H1 (cell line): ENCODE measurements at regions of chr2 and their contacts with region 1.

Region 1: GRCh38 chr2:231687133-231687852 is 21.0 kb upstream of the PTMA start:
- DNase-seq: peak; percentile 75 to 93
- H3K4me3 ChIP-seq: peak overlapping the region; percentile 16 to 54 (median 32); a peak in 7 of 8 replicates
- H3K27ac ChIP-seq: peak overlapping the region; percentile 46
- H3K4me1 ChIP-seq: peaks cover 4 to 42% (median 21%) of the 10 kb centered on the region in 4 experiments
- H3K27me3 ChIP-seq: no peaks in the 10 kb centered on the region
- CTCF ChIP-seq: peak in 2 of 3 experiments; percentile 79 to 92; a peak in 3 of 4 replicates
- EP300 ChIP-seq: no peak
- POLR2A ChIP-seq: peak in 1 of 2 experiments; percentile 79; a peak in 2 of 3 replicates
- RAD21 ChIP-seq: peak; percentile 61 to 67

Region 2: GRCh38 chr2:231522799-231523180 is 164.5 kb before region 1 on chr2:
- CTCF ChIA-PET with region 1: no interaction called
- POLR2A ChIA-PET with region 1: no interaction called
- DNase-seq: no peak
- H3K4me3 ChIP-seq: no peak overlapping the region
- H3K27ac ChIP-seq: no peak overlapping the region
- H3K4me1 ChIP-seq: peaks cover 0 to 4% (median 2%) of the 10 kb centered on the region in 4 experiments; a peak in 1 of 7 replicates
- H3K27me3 ChIP-seq: no peaks in the 10 kb centered on the region
- CTCF ChIP-seq: no peak
- EP300 ChIP-seq: no peak
- POLR2A ChIP-seq: no peak
- RAD21 ChIP-seq: no peak

Region 3: DNA sequence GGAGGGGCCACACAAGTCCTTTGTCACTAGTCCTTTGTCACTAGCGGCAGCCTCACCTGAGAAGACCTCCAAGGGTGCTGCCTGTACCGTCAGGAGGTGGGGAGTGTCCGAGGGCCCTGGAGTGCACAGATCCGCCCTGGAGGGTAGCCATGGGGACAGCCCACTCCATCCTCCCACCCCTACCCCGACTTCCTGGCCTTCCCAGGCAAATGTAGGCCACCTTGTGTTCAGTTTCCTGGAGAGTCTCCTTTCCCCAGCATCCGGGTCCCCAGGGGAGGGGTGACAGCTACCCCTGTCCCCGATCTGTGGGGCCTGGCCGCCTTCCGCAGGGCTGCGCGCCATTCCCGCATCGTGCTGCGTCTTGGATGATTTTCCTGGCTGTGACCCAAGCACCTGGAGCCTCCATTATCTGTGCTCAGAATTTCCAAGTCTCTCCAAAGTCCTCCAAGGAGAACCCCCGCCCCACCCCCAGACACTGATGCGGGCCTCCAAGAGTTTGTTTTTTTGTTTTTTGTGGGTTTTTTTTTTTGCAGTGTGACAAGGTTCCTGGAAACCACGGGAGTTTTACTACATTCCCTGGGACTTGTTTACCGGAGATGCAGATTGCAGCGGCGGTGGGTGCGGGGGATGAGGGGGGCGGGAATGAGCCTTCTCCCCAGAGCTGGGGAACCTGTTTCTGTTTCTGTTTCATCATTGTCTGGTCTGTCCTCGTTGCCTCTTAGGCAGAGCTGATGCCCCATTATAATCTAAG is 66.0 kb before region 1 on chr2:
- CTCF ChIA-PET with region 1: interaction called, 38 read pairs
- POLR2A ChIA-PET with region 1: interaction called, 6 read pairs
- DNase-seq: peak in 1 of 2 experiments; percentile 77
- H3K4me3 ChIP-seq: peak overlapping the region in 1 of 4 experiments; percentile 30; a peak in 1 of 8 replicates
- H3K27ac ChIP-seq: peak overlapping the region; percentile 87
- H3K4me1 ChIP-seq: peaks cover 9 to 14% (median 12%) of the 10 kb centered on the region in 4 experiments
- H3K27me3 ChIP-seq: no peaks in the 10 kb centered on the region
- CTCF ChIP-seq: no peak
- EP300 ChIP-seq: no peak
- POLR2A ChIP-seq: no peak
- RAD21 ChIP-seq: no peak

Region 4: DNA sequence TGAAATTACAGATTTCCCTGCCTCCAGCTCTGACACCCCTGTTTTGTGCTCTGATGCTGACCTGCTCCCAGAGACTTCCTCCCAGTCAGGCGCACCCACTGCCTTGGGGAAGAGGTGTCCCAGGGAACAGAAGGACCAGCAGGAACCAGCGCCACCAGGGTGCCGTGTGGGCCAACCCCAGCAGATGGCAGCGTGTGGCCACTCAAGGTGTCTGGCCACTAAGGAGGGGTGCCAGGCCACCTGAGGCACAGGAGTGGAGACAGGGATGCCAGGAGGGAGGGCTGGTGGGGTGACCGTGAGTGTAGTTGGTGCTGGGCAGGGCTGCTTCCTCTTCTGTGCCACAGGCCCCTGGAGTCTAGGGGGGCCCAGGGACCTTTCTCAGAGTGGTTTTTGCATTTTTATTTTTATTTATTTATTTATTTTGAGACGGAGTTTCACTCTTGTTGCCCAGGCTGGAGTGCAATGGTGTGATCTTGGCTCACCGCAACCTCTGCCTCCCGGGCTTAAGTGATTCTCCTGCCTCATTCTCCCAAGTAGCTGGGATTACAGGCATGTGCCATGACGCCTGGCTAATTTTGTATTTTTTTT is 38.6 kb before region 1 on chr2:
- CTCF ChIA-PET with region 1: interaction called, 13 read pairs
- POLR2A ChIA-PET with region 1: interaction called, 3 read pairs
- DNase-seq: peak in 1 of 2 experiments; percentile 88
- H3K4me3 ChIP-seq: no peak overlapping the region
- H3K27ac ChIP-seq: no peak overlapping the region
- H3K4me1 ChIP-seq: peaks cover 2 to 7% (median 3%) of the 10 kb centered on the region in 4 experiments; a peak in 4 of 7 replicates
- H3K27me3 ChIP-seq: no peaks in the 10 kb centered on the region
- CTCF ChIP-seq: peak; percentile 88 to 95 (median 90)
- EP300 ChIP-seq: no peak
- POLR2A ChIP-seq: no peak
- RAD21 ChIP-seq: peak; percentile 87 to 92

Region 5: GRCh38 chr2:231662028-231662810 is 25.1 kb before region 1 on chr2:
- CTCF ChIA-PET with region 1: interaction called, 6 read pairs
- POLR2A ChIA-PET with region 1: interaction called, 51 read pairs
- DNase-seq: peak; percentile 97 to 98
- H3K4me3 ChIP-seq: peak overlapping the region; percentile 14 to 54 (median 24); a peak in 6 of 8 replicates
- H3K27ac ChIP-seq: peak overlapping the region; percentile 95
- H3K4me1 ChIP-seq: peaks cover 0 to 26% (median 10%) of the 10 kb centered on the region in 4 experiments; a peak in 6 of 7 replicates
- H3K27me3 ChIP-seq: peaks cover 0 to 10% (median 3%) of the 10 kb centered on the region in 4 experiments; a peak in 5 of 7 replicates
- CTCF ChIP-seq: 0 out of 4 replicates have a peak, but pooled peaks of 1 of the 3 experiments have one; percentile 5
- EP300 ChIP-seq: peak; percentile 42 to 63; a peak in 1 of 3 replicates
- POLR2A ChIP-seq: peak in 1 of 2 experiments; percentile 79; a peak in 2 of 3 replicates
- RAD21 ChIP-seq: peak in 1 of 2 experiments; percentile 15; a peak in 1 of 4 replicates

Region 6: GRCh38 chr2:231701456-231702373 is 14.4 kb after region 1 on chr2:
- CTCF ChIA-PET with region 1: interaction called, 135 read pairs
- POLR2A ChIA-PET with region 1: interaction called, 1,080 read pairs
- DNase-seq: no peak
- H3K4me3 ChIP-seq: no peak overlapping the region
- H3K27ac ChIP-seq: no peak overlapping the region; the same call in 1 of the 2 replicates
- H3K4me1 ChIP-seq: peaks cover 0 to 10% (median 3%) of the 10 kb centered on the region in 4 experiments; a peak in 5 of 7 replicates
- H3K27me3 ChIP-seq: no peaks in the 10 kb centered on the region
- CTCF ChIP-seq: no peak
- EP300 ChIP-seq: no peak
- POLR2A ChIP-seq: no peak
- RAD21 ChIP-seq: no peak

Region 7: DNA sequence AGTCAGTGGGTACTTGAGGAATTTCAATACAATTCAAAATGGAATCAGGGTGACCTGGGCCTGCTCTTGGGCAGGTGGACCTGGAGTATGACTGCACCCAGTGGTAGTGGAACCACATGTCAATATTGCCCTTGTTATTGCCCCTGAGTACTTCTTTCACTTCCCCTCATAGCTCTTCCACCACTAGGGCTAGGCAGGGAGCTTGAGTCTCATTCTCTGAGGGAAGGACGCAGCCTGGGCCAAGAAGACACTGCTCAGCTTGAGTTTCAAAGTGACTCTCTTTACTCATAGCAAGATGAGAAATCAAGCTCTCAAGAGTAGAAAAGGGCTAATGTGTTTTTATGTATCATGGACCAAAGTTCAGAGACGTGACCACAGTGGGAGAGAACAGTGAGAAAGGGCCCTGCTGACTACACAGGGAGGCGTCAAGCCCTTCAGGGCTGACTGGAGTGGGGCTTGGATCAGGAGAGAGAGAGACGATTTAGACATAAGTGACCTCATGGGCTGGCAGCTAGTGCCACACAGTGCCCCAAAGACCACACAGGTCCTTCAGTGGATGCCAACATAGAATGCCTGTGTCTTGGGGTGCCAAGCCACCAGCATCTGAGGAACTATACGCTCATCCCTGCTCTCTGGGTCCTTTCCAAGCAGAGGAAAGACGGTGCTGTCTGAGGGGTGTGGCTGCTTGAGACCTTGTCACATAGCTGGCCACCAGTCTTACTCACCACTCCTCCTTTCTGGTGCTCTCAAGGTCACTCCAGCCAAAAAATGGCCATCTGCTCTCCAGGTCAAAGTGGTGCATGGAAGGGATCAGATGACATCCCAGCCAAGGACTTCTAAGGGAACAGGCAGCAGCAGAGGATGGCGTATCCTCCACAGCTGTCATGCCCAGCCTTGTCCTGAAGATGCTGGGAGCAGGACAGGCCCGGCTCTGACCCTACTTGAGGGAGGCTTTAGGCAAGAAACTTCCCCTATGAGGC is 34.0 kb after region 1 on chr2:
- CTCF ChIA-PET with region 1: interaction called, 555 read pairs
- POLR2A ChIA-PET with region 1: interaction called, 1,080 read pairs
- DNase-seq: no peak
- H3K4me3 ChIP-seq: no peak overlapping the region
- H3K27ac ChIP-seq: no peak overlapping the region
- H3K4me1 ChIP-seq: peaks cover 0 to 7% (median 3%) of the 10 kb centered on the region in 4 experiments; a peak in 2 of 7 replicates
- H3K27me3 ChIP-seq: no peaks in the 10 kb centered on the region
- CTCF ChIP-seq: peak in 1 of 3 experiments; percentile 3; a peak in 1 of 4 replicates
- EP300 ChIP-seq: no peak
- POLR2A ChIP-seq: no peak
- RAD21 ChIP-seq: no peak

Region 8: DNA sequence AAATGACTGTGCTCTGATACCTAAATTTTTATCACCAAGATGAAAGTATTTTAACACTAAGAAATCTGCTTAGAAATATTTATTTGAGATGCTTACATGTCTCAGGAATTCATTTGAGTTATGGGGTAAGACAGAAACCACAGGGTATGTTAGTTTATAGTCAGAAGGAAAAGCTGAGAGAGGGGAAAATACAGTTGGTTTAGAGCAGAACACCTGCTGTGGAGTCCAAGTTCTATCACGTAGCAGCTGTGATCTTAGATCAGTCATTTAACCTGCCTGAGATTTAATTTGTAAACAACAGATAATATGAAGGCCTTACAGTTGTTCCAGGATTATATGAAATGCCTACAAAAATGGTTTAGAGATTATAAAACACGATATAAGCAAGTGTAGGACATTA is 64.8 kb after region 1 on chr2:
- CTCF ChIA-PET with region 1: no interaction called
- POLR2A ChIA-PET with region 1: no interaction called
- DNase-seq: no peak
- H3K4me3 ChIP-seq: no peak overlapping the region
- H3K27ac ChIP-seq: no peak overlapping the region
- H3K4me1 ChIP-seq: peaks cover 0 to 7% (median 2%) of the 10 kb centered on the region in 4 experiments; a peak in 2 of 7 replicates
- H3K27me3 ChIP-seq: no peaks in the 10 kb centered on the region
- CTCF ChIP-seq: no peak
- EP300 ChIP-seq: no peak
- POLR2A ChIP-seq: no peak
- RAD21 ChIP-seq: no peak

Region 9: DNA sequence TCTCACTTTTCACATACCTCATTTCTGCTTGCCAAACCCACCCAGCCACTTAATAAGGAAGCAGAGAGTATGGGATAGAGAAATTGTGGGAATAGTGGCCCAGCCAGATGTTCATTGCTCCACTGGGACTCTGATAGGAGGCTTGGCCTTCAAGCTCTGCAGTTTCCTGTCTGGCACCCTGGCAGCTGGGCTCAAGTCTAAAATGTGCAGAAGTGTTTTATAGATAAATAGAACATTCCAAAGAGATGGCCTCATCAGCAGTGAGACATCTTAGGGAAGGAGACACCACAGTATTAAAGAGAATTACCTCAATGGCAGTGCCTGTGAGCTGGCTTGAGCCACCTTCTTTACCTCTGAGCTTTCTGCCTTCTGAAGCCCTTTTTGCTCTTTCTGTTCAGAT is 123.6 kb after region 1 on chr2:
- CTCF ChIA-PET with region 1: no interaction called
- POLR2A ChIA-PET with region 1: no interaction called
- DNase-seq: no peak
- H3K4me3 ChIP-seq: no peak overlapping the region
- H3K27ac ChIP-seq: no peak overlapping the region
- H3K4me1 ChIP-seq: no peaks in the 10 kb centered on the region
- H3K27me3 ChIP-seq: no peaks in the 10 kb centered on the region
- CTCF ChIP-seq: no peak
- EP300 ChIP-seq: no peak
- POLR2A ChIP-seq: no peak
- RAD21 ChIP-seq: no peak